HCT116 (cell line): ENCODE measurements at regions of chr5 and their contacts with region 1.

Region 1: GRCh38 chr5:73448463-73449136 is at the start of gene FOXD1:
- DNase-seq: peak; percentile 92
- ATAC-seq: peak; percentile 88
- H3K4me3 ChIP-seq: peak within 1 kb of the TSS; percentile 64 to 67
- H3K27ac ChIP-seq: peak within 1 kb of the TSS; percentile 89
- H3K4me1 ChIP-seq: peaks cover 12 to 29% of the 10 kb centered on the region in 2 experiments; a peak in 3 of 4 replicates
- H3K27me3 ChIP-seq: no peaks in the 10 kb centered on the region
- CTCF ChIP-seq: no peak
- POLR2A ChIP-seq: peak; percentile 67
- RAD21 ChIP-seq: no peak
- total RNA-seq, gene FOXD1: 26.8 TPM

Region 2: DNA sequence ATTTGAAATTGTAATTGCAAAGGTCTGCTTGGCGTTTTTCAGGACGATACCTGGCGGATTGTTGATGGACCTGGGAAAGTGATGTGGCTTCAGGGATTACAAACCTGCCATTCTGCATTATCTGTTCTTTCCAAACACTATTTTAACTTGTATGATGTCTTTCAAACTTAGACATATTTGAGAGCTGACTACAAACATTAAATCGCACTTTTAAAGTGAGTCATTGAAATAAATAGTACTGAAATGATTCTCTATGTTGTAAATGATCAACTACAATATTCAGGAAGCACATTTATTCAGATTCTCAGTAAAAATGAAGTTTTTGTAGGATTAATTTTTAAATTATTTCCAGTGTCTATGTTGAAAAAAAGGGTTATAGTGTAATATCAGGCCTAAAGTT is 360.6 kb before region 1 on chr5:
- CTCF ChIA-PET with region 1: interaction called, 4 read pairs
- POLR2A ChIA-PET with region 1: no interaction called
- RAD21 ChIA-PET with region 1: no interaction called
- intact Hi-C with region 1: loop called (anchors 2 kb)
- DNase-seq: no peak
- ATAC-seq: no peak
- H3K4me3 ChIP-seq: no peak overlapping the region
- H3K27ac ChIP-seq: no peak overlapping the region
- H3K4me1 ChIP-seq: peaks cover 0 to 2% of the 10 kb centered on the region in 2 experiments; a peak in 1 of 4 replicates
- H3K27me3 ChIP-seq: no peaks in the 10 kb centered on the region
- CTCF ChIP-seq: no peak
- POLR2A ChIP-seq: no peak
- RAD21 ChIP-seq: no peak

Region 3: GRCh38 chr5:73565139-73565968 is 116.8 kb after region 1 on chr5 and contains the starts of genes ANKRA2 and UTP15:
- CTCF ChIA-PET with region 1: no interaction called
- POLR2A ChIA-PET with region 1: no interaction called
- RAD21 ChIA-PET with region 1: no interaction called
- intact Hi-C with region 1: loop called (anchors 1 kb)
- DNase-seq: peak; percentile 97
- ATAC-seq: peak; percentile 94
- H3K4me3 ChIP-seq: peak within 1 kb of the TSS; percentile 77 to 93
- H3K27ac ChIP-seq: peak within 1 kb of the TSS; percentile 46
- H3K4me1 ChIP-seq: peaks cover 9 to 17% of the 10 kb centered on the region in 2 experiments
- H3K27me3 ChIP-seq: no peaks in the 10 kb centered on the region
- CTCF ChIP-seq: no peak
- POLR2A ChIP-seq: peak; percentile 63
- RAD21 ChIP-seq: no peak
- total RNA-seq, gene ANKRA2: 17.0 TPM
- total RNA-seq, gene UTP15: 39.3 TPM